GM13977 (cell line): ENCODE measurements at regions of chr14 and their contacts with region 1.

Region 1: GRCh38 chr14:30656190-30656632 is 34.1 kb downstream of the SCFD1 start:
- DNase-seq: no peak
- CTCF ChIP-seq: peak; percentile 72

Region 2: GRCh38 chr14:30417121-30417520 is 239.1 kb before region 1 on chr14:
- in situ Hi-C with region 1: no loop called
- DNase-seq: no peak
- CTCF ChIP-seq: no peak

Region 3: GRCh38 chr14:30906752-30907658 is 250.8 kb after region 1 on chr14:
- in situ Hi-C with region 1: loop called (anchors 5 kb)
- DNase-seq: no peak
- CTCF ChIP-seq: peak; percentile 53

Region 4: GRCh38 chr14:31360919-31361662 is 704.9 kb after region 1 on chr14:
- in situ Hi-C with region 1: loop called (anchors 25 kb)
- DNase-seq: no peak
- CTCF ChIP-seq: no peak